Adrenal gland (tissue), 19 donors: ENCODE measurements at regions of chr2 and their contacts with region 1.

Region 1: GRCh38 chr2:80242355-80242910 is 62.1 kb downstream of the LRRTM1 start:
- DNase-seq: no peak
- H3K4me3 ChIP-seq: no peak overlapping the region
- H3K27ac ChIP-seq: no peak overlapping the region
- H3K4me1 ChIP-seq: no peaks in the 10 kb centered on the region
- H3K27me3 ChIP-seq: no peaks in the 10 kb centered on the region
- CTCF ChIP-seq: no peak
- POLR2A ChIP-seq: no peak

Region 2: GRCh38 chr2:79717364-79718007 is 524.9 kb before region 1 on chr2:
- intact Hi-C with region 1: loop called in 1 of 2 experiments (anchors 10 kb)
- DNase-seq: no peak
- H3K4me3 ChIP-seq: no peak overlapping the region
- H3K27ac ChIP-seq: no peak overlapping the region
- H3K4me1 ChIP-seq: no peaks in the 10 kb centered on the region
- H3K27me3 ChIP-seq: no peaks in the 10 kb centered on the region
- CTCF ChIP-seq: no peak
- POLR2A ChIP-seq: no peak

Region 3: DNA sequence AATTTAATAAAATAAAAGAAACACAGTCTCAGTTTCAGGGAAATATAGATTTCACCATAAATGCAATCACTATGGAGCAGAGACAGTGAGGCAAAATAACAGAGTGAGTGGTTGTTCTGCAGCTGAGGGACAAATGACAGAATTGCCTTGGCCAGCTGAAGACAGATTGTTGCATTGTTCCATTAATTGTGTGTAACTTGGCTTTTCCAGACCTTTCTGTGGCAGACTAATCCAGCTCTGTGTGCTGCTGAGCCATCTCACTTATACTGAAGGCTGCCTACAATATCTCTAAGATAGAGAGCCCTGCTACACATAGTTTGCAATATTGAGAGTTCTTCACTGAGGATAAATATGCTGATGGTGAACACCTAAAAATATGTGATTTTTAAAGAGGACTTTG is 50.6 kb after region 1 on chr2:
- intact Hi-C with region 1: no loop called
- DNase-seq: no peak
- H3K4me3 ChIP-seq: no peak overlapping the region
- H3K27ac ChIP-seq: no peak overlapping the region
- H3K4me1 ChIP-seq: no peaks in the 10 kb centered on the region
- H3K27me3 ChIP-seq: no peaks in the 10 kb centered on the region
- CTCF ChIP-seq: no peak
- POLR2A ChIP-seq: no peak